OCI-LY7 (cell line): ENCODE measurements at regions of chr21 and their contacts with region 1.

Region 1: GRCh38 chr21:17451364-17451891 is 61.4 kb upstream of the CXADR start:
- DNase-seq: no peak
- H3K4me3 ChIP-seq: no peak overlapping the region
- H3K27ac ChIP-seq: no peak overlapping the region
- H3K4me1 ChIP-seq: peaks cover 19% of the 10 kb centered on the region
- CTCF ChIP-seq: no peak

Region 2: GRCh38 chr21:17467392-17467791 is 16.0 kb after region 1 on chr21:
- CTCF ChIA-PET with region 1: no interaction called
- POLR2A ChIA-PET with region 1: interaction called, 16 read pairs
- intact Hi-C with region 1: no loop called
- DNase-seq: no peak
- H3K4me3 ChIP-seq: no peak overlapping the region
- H3K27ac ChIP-seq: no peak overlapping the region
- H3K4me1 ChIP-seq: peaks cover 7% of the 10 kb centered on the region
- CTCF ChIP-seq: no peak